ENCODE measurements at regions of chrX and their contacts with region 1.

Region 1: GRCh38 chrX:40792433-40792832 is 57.1 kb upstream of the MED14 start:
- DNase-seq: no peak
- H3K4me3 ChIP-seq: no peak overlapping the region
- H3K27ac ChIP-seq: no peak overlapping the region
- H3K4me1 ChIP-seq: peaks cover 5% of the 10 kb centered on the region
- H3K27me3 ChIP-seq: no peaks in the 10 kb centered on the region
- CTCF ChIP-seq: no peak

Region 2: GRCh38 chrX:40539214-40540142 is 253.0 kb before region 1 on chrX:
- CTCF ChIA-PET with region 1: interaction called, 7 read pairs
- dilution Hi-C with region 1: no loop called
- in situ Hi-C with region 1: no loop called
- intact Hi-C with region 1: loop called (anchors 1 kb)
- DNase-seq: peak; percentile 32
- H3K4me3 ChIP-seq: no peak overlapping the region
- H3K27ac ChIP-seq: no peak overlapping the region
- H3K4me1 ChIP-seq: no peaks in the 10 kb centered on the region
- H3K27me3 ChIP-seq: peaks cover 8% of the 10 kb centered on the region
- CTCF ChIP-seq: peak in 1 of 2 donors; percentile 13

Region 3: GRCh38 chrX:40573763-40574162 is 218.7 kb before region 1 on chrX:
- CTCF ChIA-PET with region 1: interaction called, 18 read pairs
- dilution Hi-C with region 1: no loop called
- in situ Hi-C with region 1: no loop called
- intact Hi-C with region 1: no loop called
- DNase-seq: peak; percentile 14
- H3K4me3 ChIP-seq: no peak overlapping the region
- H3K27ac ChIP-seq: no peak overlapping the region
- H3K4me1 ChIP-seq: no peaks in the 10 kb centered on the region
- H3K27me3 ChIP-seq: no peaks in the 10 kb centered on the region
- CTCF ChIP-seq: peak; percentile 84 to 92

Region 4: GRCh38 chrX:40647307-40648197 is 144.9 kb before region 1 on chrX and contains the start of gene CXorf38:
- CTCF ChIA-PET with region 1: interaction called, 6 read pairs
- dilution Hi-C with region 1: no loop called
- in situ Hi-C with region 1: loop called in 1 of 2 experiments (anchors 10 kb)
- intact Hi-C with region 1: loop called (anchors 1 kb)
- DNase-seq: peak; percentile 88
- H3K4me3 ChIP-seq: peak within 1 kb of the TSS; percentile 52 to 89 (median 77)
- H3K27ac ChIP-seq: peak within 1 kb of the TSS; percentile 62
- H3K4me1 ChIP-seq: peaks cover 17% of the 10 kb centered on the region
- H3K27me3 ChIP-seq: no peaks in the 10 kb centered on the region
- CTCF ChIP-seq: no peak
- total RNA-seq, gene CXorf38: 18.0 to 19.8 TPM

Region 5: DNA sequence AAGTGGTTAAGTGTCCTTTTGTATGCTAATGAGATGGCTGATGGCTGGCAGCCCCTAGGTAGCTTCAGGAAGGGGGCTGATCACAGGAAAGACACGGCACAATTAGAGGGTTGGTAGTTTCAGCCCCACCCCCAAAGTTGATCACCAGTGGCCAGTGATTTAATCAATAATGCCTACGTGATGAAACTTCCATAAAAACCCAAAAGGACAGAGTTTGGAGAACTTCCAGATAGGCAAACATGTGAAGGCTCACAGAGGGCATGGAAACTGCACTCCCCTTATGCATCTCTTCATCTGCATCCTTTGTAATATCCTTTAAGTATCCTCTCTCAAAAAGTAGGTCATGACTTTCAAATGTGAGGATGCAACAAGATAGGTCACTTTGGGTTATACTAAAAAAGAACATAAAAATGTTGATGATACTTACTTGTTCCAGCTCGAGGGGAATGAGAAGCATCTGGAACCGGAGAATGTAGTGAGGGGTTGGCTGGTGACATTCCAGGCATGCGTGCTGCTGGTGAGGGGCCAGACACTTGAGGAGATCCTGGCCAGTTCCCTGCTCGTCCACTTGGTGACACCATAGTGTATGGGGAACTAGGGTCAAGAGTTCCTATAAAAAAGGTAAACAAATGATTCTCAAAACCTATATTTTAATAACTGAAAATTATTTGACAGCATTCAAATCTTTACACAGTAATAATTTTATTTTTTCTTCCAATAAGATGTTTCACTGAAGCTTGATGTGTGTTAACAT is 128.4 kb before region 1 on chrX:
- CTCF ChIA-PET with region 1: no interaction called
- dilution Hi-C with region 1: no loop called
- in situ Hi-C with region 1: loop called in 1 of 2 experiments (anchors 10 kb)
- intact Hi-C with region 1: loop called (anchors 1 kb)
- DNase-seq: no peak
- H3K4me3 ChIP-seq: no peak overlapping the region
- H3K27ac ChIP-seq: no peak overlapping the region
- H3K4me1 ChIP-seq: no peaks in the 10 kb centered on the region
- H3K27me3 ChIP-seq: no peaks in the 10 kb centered on the region
- CTCF ChIP-seq: peak; percentile 29 to 41

Region 6: DNA sequence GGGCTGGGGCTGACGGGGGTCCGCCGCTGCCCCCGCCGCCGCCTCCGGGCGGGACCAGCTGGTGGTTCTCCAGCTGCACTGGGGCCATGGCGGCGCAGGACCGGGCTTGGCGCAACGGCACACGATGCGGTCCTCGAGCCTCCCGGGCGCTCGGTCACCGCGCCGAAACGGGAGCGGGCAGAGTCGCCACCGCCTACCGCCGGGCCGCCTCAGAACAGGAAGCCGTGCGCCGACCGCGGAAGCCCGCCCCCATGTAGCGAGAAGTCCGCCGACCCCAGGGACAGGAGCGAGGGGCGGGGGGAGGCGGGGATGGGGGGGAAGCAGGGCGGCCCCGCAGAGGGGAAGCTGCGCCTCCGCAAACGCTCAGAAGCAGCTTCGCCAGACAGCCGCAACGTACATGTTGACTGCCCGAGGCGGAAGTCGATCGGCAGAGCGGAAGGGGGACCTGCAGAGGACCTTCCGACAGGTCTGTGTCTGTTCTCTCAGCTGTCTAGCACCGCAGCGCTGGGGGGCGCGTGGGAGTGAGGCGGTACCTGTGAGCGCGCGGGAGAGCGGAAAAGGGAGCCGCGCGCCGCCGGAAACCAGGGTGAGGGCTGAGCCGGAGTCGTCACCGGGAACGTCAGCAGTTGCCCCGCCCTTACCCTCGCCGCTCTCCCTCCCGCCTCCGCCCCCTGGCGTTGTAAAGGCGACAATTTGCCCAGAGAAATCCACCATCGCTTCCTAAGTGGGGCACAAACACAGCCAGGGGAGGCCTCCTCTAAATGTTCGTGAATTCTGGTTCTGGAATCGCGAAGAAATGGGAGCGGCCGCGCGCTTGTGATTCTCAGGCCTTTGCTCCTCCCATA is 56.9 kb before region 1 on chrX and contains the start of gene MED14:
- CTCF ChIA-PET with region 1: no interaction called
- dilution Hi-C with region 1: no loop called
- in situ Hi-C with region 1: no loop called
- intact Hi-C with region 1: loop called (anchors 1 kb)
- DNase-seq: peak; percentile 93
- H3K4me3 ChIP-seq: peak within 1 kb of the TSS; percentile 51 to 88 (median 58)
- H3K27ac ChIP-seq: peak within 1 kb of the TSS; percentile 87
- H3K4me1 ChIP-seq: peaks cover 3% of the 10 kb centered on the region
- H3K27me3 ChIP-seq: no peaks in the 10 kb centered on the region
- CTCF ChIP-seq: peak; percentile 28 to 75
- total RNA-seq, gene MED14: 25.7 to 58.7 TPM

Region 7: GRCh38 chrX:40922307-40922706 is 129.9 kb after region 1 on chrX:
- CTCF ChIA-PET with region 1: no interaction called
- dilution Hi-C with region 1: no loop called
- in situ Hi-C with region 1: no loop called
- intact Hi-C with region 1: loop called (anchors 1 kb)
- DNase-seq: peak; percentile 55
- H3K4me3 ChIP-seq: no peak overlapping the region
- H3K27ac ChIP-seq: no peak overlapping the region
- H3K4me1 ChIP-seq: no peaks in the 10 kb centered on the region
- H3K27me3 ChIP-seq: no peaks in the 10 kb centered on the region
- CTCF ChIP-seq: peak; percentile 39 to 56